CD4-positive, alpha-beta T cell (primary cell): ENCODE measurements at regions of chr19 and their contacts with region 1.

Region 1: DNA sequence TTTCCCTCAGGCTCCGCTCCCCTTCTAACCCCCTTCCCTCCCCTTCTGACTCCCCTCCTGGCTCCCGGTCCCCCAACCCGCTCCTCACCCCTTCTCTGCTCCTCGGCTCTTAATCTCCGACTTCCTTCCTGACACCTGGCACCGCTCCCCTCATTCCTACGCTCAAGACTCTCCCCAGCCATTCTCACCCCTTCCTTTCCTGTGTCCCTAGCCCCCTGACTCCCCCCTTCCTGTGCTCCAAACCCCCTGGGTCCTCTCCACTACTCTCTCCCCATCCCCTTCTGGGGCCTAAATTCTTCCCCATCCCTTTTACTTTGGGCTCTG is 658 bp downstream of the CLPP start:
- DNase-seq: peak in 1 of 14 experiments; percentile 33
- ATAC-seq: peak; percentile 3
- H3K4me3 ChIP-seq: peak overlapping the region; percentile 86
- H3K4me3 Mint-ChIP-seq: peak overlapping the region; percentile 94
- H3K27ac ChIP-seq: peak overlapping the region; percentile 83
- H3K27ac Mint-ChIP-seq: peak overlapping the region; percentile 92
- H3K4me1 ChIP-seq: peaks cover 40% of the 10 kb centered on the region
- H3K4me1 Mint-ChIP-seq: peaks cover 27% of the 10 kb centered on the region
- H3K27me3 ChIP-seq: no peaks in the 10 kb centered on the region
- H3K27me3 Mint-ChIP-seq: no peaks in the 10 kb centered on the region
- CTCF ChIP-seq: no peak

Region 2: DNA sequence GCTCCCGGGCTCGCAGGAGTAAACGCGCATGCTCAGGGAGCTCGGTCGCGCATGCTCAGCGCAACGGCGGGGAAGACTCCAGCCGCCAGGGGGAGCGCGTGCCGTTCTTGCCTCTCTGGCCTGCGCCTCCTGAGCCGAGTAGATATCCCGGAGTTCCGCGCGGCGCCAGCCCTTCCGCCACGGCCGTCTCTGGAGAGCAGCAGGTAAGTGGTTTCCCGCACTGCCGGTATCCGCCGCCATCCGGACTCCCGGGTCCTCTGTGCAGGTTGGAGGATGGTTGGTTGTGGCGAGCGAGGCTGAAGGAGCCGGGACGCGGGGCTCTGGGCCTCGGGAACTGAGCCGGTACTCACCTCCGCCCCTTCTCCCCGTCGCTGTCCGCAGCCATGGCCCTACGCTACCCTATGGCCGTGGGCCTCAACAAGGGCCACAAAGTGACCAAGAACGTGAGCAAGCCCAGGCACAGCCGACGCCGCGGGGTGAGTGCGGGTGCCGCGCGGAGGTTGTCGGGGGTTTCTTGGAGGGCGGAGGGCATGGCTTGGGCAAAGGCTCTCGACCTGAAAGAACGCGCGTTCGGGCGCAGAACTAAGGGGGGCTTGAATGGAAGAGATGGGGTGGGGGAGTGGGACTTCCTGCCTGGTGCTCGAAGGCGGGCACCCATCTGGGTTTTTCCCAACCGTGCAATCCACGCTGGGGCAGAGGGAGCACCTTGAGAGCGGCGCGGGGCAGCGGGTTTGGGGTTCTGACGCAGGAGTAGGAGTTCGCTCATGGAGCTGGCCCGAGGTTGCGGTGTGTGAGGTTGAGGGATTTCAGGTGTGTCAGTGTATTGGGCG is 671.6 kb before region 1 on chr19 and contains the start of gene RPL36:
- CTCF ChIA-PET with region 1: no interaction called
- POLR2A ChIA-PET with region 1: no interaction called
- intact Hi-C with region 1: loop called in 1 of 2 experiments (anchors 10 kb)
- DNase-seq: peak; percentile 95 to 100 (median 99)
- ATAC-seq: peak; percentile 65
- H3K4me3 ChIP-seq: peak within 1 kb of the TSS; percentile 100
- H3K4me3 Mint-ChIP-seq: peak within 1 kb of the TSS; percentile 96
- H3K27ac ChIP-seq: peak within 1 kb of the TSS; percentile 91 to 95
- H3K27ac Mint-ChIP-seq: peak within 1 kb of the TSS; percentile 96
- H3K4me1 ChIP-seq: peaks cover 54% of the 10 kb centered on the region
- H3K4me1 Mint-ChIP-seq: peaks cover 43% of the 10 kb centered on the region
- H3K27me3 ChIP-seq: no peaks in the 10 kb centered on the region
- H3K27me3 Mint-ChIP-seq: no peaks in the 10 kb centered on the region
- CTCF ChIP-seq: peak; percentile 98
- total RNA-seq, gene RPL36: 1,509 to 1,565 TPM

Region 3: DNA sequence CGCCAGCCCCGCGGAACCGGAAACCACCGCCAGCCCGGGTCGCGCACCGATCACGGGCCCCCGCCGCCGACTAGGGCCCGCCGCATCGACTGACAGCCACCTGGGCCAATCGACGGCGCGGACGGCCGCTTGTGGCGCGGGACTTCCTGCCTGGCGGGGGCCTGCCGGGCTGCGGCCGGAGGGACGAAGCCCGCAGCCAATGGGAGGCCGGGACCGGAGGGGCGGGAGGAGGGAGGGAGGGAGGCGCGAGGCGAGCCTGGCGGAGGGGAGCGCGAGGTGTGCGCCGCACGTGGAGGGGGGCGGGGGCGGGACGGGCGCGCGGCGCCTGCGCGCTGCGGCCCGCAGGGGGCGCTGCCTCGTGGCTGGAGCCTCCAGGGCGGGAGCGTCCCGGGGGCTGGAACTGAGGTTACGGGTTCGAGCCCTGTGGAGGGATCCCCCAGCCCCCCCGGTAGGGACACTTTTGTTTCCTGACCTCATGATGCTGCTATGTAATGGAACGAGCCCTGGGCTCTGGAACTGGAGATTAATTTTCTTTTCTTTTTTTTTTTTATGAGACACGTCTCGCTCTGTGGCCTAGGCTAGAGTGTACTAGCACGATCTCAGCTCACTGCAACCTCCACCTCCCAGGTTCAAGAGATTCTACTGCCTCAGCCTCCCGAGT is 81.9 kb before region 1 on chr19 and contains the start of gene MLLT1:
- CTCF ChIA-PET with region 1: no interaction called
- POLR2A ChIA-PET with region 1: interaction called, 4 read pairs
- intact Hi-C with region 1: loop called in 1 of 2 experiments (anchors 2 kb)
- DNase-seq: peak; percentile 85 to 98 (median 94)
- ATAC-seq: peak; percentile 79
- H3K4me3 ChIP-seq: peak within 1 kb of the TSS; percentile 67
- H3K4me3 Mint-ChIP-seq: peak within 1 kb of the TSS; percentile 94
- H3K27ac ChIP-seq: peak within 1 kb of the TSS; percentile 54 to 75
- H3K27ac Mint-ChIP-seq: peak within 1 kb of the TSS; percentile 86
- H3K4me1 ChIP-seq: peaks cover 42% of the 10 kb centered on the region
- H3K4me1 Mint-ChIP-seq: peaks cover 40% of the 10 kb centered on the region
- H3K27me3 ChIP-seq: no peaks in the 10 kb centered on the region
- H3K27me3 Mint-ChIP-seq: no peaks in the 10 kb centered on the region
- CTCF ChIP-seq: peak; percentile 56
- total RNA-seq, gene MLLT1: 18.3 to 22.1 TPM

Region 4: GRCh38 chr19:6393074-6393983 is 31.3 kb after region 1 on chr19 and contains the start of gene GTF2F1:
- CTCF ChIA-PET with region 1: no interaction called
- POLR2A ChIA-PET with region 1: interaction called, 29 read pairs
- intact Hi-C with region 1: loop called (anchors 1 to 2 kb)
- DNase-seq: peak; percentile 88 to 97 (median 90)
- ATAC-seq: peak; percentile 81
- H3K4me3 ChIP-seq: peak within 1 kb of the TSS; percentile 78
- H3K4me3 Mint-ChIP-seq: peak within 1 kb of the TSS; percentile 97
- H3K27ac ChIP-seq: peak within 1 kb of the TSS; percentile 89 to 98
- H3K27ac Mint-ChIP-seq: peak within 1 kb of the TSS; percentile 99
- H3K4me1 ChIP-seq: peaks cover 29% of the 10 kb centered on the region
- H3K4me1 Mint-ChIP-seq: peaks cover 29% of the 10 kb centered on the region
- H3K27me3 ChIP-seq: no peaks in the 10 kb centered on the region
- H3K27me3 Mint-ChIP-seq: no peaks in the 10 kb centered on the region
- CTCF ChIP-seq: no peak
- total RNA-seq, gene GTF2F1: 56.1 to 61.1 TPM

Region 5: GRCh38 chr19:6442087-6442688 is 80.2 kb after region 1 on chr19:
- CTCF ChIA-PET with region 1: no interaction called
- POLR2A ChIA-PET with region 1: no interaction called
- intact Hi-C with region 1: no loop called
- DNase-seq: no peak
- ATAC-seq: no peak
- H3K4me3 ChIP-seq: no peak overlapping the region
- H3K4me3 Mint-ChIP-seq: no peak overlapping the region
- H3K27ac ChIP-seq: no peak overlapping the region
- H3K27ac Mint-ChIP-seq: no peak overlapping the region
- H3K4me1 ChIP-seq: no peaks in the 10 kb centered on the region
- H3K4me1 Mint-ChIP-seq: no peaks in the 10 kb centered on the region
- H3K27me3 ChIP-seq: no peaks in the 10 kb centered on the region
- H3K27me3 Mint-ChIP-seq: no peaks in the 10 kb centered on the region
- CTCF ChIP-seq: no peak

Region 6: DNA sequence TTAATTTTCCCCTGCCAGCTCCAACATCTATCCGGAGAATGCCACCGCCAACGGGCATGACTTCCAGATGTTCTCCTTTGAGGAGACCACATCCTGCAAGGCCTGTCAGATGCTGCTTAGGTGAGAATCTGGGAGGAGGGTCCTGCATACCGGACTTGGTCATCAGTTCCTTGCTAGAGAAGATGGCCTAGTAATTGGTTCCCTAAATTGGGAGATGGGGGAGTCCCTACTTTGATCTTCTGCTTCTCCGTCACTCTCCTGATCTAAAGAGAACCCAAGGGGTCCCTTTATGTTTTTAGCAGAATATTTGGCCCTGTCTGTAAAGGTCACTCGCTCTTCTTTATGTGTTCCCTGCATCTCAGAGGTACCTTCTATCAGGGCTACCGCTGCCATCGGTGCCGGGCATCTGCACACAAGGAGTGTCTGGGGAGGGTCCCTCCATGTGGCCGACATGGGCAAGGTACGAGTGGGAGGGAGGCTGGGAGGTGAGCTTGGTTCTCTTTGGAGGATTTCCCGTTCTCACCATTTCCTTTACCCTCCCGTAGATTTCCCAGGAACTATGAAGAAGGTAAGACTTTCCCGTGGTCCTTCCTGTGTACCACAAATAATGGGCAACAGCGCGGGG is 471.3 kb after region 1 on chr19:
- CTCF ChIA-PET with region 1: no interaction called
- POLR2A ChIA-PET with region 1: no interaction called
- intact Hi-C with region 1: no loop called
- DNase-seq: peak in 1 of 14 experiments; percentile 10
- ATAC-seq: no peak
- H3K4me3 ChIP-seq: no peak overlapping the region
- H3K4me3 Mint-ChIP-seq: no peak overlapping the region
- H3K27ac ChIP-seq: no peak overlapping the region
- H3K27ac Mint-ChIP-seq: peak overlapping the region; percentile 30
- H3K4me1 ChIP-seq: no peaks in the 10 kb centered on the region
- H3K4me1 Mint-ChIP-seq: peaks cover 22% of the 10 kb centered on the region
- H3K27me3 ChIP-seq: no peaks in the 10 kb centered on the region
- H3K27me3 Mint-ChIP-seq: no peaks in the 10 kb centered on the region
- CTCF ChIP-seq: no peak

Region 7: GRCh38 chr19:6862673-6863078 is 500.7 kb after region 1 on chr19:
- CTCF ChIA-PET with region 1: no interaction called
- POLR2A ChIA-PET with region 1: no interaction called
- intact Hi-C with region 1: loop called in 1 of 2 experiments (anchors 10 kb)
- DNase-seq: peak; percentile 84 to 96 (median 88)
- ATAC-seq: peak; percentile 88
- H3K4me3 ChIP-seq: peak overlapping the region; percentile 53
- H3K4me3 Mint-ChIP-seq: peak overlapping the region; percentile 59
- H3K27ac ChIP-seq: no peak overlapping the region
- H3K27ac Mint-ChIP-seq: peak overlapping the region; percentile 71
- H3K4me1 ChIP-seq: peaks cover 18% of the 10 kb centered on the region
- H3K4me1 Mint-ChIP-seq: peaks cover 29% of the 10 kb centered on the region
- H3K27me3 ChIP-seq: no peaks in the 10 kb centered on the region
- H3K27me3 Mint-ChIP-seq: no peaks in the 10 kb centered on the region
- CTCF ChIP-seq: peak; percentile 80

Region 8: GRCh38 chr19:7919610-7920518 is 1557.9 kb after region 1 on chr19 and contains the start of gene SNAPC2:
- CTCF ChIA-PET with region 1: no interaction called
- POLR2A ChIA-PET with region 1: no interaction called
- intact Hi-C with region 1: loop called in 1 of 2 experiments (anchors 10 kb)
- DNase-seq: peak; percentile 93 to 98 (median 96)
- ATAC-seq: peak; percentile 64
- H3K4me3 ChIP-seq: peak within 1 kb of the TSS; percentile 69
- H3K4me3 Mint-ChIP-seq: peak within 1 kb of the TSS; percentile 94
- H3K27ac ChIP-seq: peak within 1 kb of the TSS; percentile 78 to 79
- H3K27ac Mint-ChIP-seq: peak within 1 kb of the TSS; percentile 79
- H3K4me1 ChIP-seq: peaks cover 70% of the 10 kb centered on the region
- H3K4me1 Mint-ChIP-seq: peaks cover 37% of the 10 kb centered on the region
- H3K27me3 ChIP-seq: peaks cover 34 to 35% of the 10 kb centered on the region in 2 experiments
- H3K27me3 Mint-ChIP-seq: peaks cover 37% of the 10 kb centered on the region
- CTCF ChIP-seq: no peak
- total RNA-seq, gene SNAPC2: 9.9 to 10.9 TPM